ENCODE measurements at regions of chr14 and their contacts with region 1.

Region 1: GRCh38 chr14:90301668-90302090 is 30.1 kb downstream of the NRDE2 start:
- DNase-seq: peak; percentile 38 to 62
- ATAC-seq: peak; percentile 72 to 84; a peak in 4 of 6 replicates
- H3K4me3 ChIP-seq: no peak overlapping the region
- H3K27ac ChIP-seq: no peak overlapping the region
- H3K4me1 ChIP-seq: no peaks in the 10 kb centered on the region
- CTCF ChIP-seq: peak; percentile 66
- EP300 ChIP-seq: no peak
- POLR2A ChIP-seq: no peak
- RAD21 ChIP-seq: peak; percentile 71 to 79

Region 2: DNA sequence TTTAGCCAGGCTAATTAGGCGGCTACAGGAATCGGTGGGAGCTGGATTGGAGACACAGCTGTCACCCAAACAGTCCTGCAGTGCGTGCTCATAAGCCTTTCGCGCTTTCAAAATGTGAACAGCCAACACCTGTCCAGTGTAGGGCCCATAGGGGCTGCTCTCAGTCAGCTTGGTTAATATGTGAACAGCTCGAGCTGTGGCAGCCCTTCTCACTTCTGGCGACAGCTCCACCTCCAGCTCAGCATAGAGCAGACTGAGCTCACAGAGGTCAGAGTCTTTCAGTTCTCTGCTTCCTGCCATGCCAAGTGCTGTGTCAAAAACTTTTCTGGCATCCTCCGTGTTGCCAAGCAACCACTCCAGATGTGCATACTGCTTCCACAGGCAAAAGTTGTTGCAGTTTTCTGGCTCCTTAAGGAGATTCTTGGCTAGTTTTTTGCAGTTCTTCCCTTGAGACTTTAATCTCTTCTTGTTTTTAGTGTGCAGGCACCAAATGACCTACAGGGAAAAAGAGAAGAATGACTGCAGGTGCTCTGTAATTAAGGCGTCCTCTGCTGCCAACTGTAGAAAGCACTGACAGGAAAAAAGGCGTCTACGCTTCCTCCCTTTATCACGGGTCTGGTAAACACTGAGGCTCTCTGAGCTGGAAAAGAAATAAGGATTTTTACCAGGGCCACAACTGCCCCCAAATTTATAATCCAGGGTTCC is 12.9 kb before region 1 on chr14:
- CTCF ChIA-PET with region 1: interaction called, 15 read pairs
- POLR2A ChIA-PET with region 1: no interaction called
- DNase-seq: no peak
- ATAC-seq: no peak
- H3K4me3 ChIP-seq: no peak overlapping the region
- H3K27ac ChIP-seq: no peak overlapping the region
- H3K4me1 ChIP-seq: no peaks in the 10 kb centered on the region
- CTCF ChIP-seq: no peak
- EP300 ChIP-seq: no peak
- POLR2A ChIP-seq: no peak
- RAD21 ChIP-seq: no peak